GM12878 (cell line): ENCODE measurements at regions of chr3 and their contacts with region 1.

Region 1: DNA sequence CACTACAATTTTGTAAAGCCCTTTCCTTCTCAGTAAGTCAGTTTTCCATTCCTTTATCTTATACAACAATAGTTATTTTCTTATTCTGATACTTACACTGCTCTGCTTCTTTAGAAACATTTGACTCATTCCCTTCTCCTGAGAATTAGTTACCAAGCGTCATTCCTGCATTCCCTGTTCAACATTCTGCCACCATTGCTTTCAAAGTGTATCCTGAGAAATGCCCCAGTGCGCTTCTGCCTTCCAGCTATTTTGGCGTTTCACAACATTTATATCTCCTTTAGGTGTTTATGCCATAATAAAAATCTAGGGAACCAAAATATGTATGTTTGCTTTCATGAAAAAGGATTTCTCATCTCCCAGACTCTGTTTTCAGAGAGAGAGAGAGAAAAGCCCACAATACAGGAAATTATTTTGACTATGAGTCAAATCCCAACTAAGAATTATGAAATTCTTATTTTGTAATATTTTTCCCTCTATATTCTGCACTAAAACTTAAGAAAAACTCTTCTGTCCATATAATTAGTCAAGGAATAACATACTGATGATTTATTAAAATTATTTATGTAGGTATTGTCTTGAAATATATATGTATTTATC is 118.2 kb upstream of the RAP2B start:
- DNase-seq: no peak
- ATAC-seq: no peak
- H3K4me3 ChIP-seq: no peak overlapping the region
- H3K27ac ChIP-seq: no peak overlapping the region
- H3K4me1 ChIP-seq: no peaks in the 10 kb centered on the region
- H3K27me3 ChIP-seq: no peaks in the 10 kb centered on the region
- CTCF ChIP-seq: no peak
- EP300 ChIP-seq: no peak
- POLR2A ChIP-seq: no peak
- RAD21 ChIP-seq: no peak

Region 2: GRCh38 chr3:153032891-153033290 is 10.9 kb before region 1 on chr3:
- CTCF ChIA-PET with region 1: interaction called, 7 read pairs
- POLR2A ChIA-PET with region 1: no interaction called
- RAD21 ChIA-PET with region 1: interaction called, 6 read pairs
- SMC1A ChIA-PET with region 1: interaction called, 10 read pairs
- in situ Hi-C with region 1: no loop called
- intact Hi-C with region 1: no loop called
- DNase-seq: no peak
- ATAC-seq: no peak
- H3K4me3 ChIP-seq: no peak overlapping the region
- H3K27ac ChIP-seq: no peak overlapping the region
- H3K4me1 ChIP-seq: no peaks in the 10 kb centered on the region
- H3K27me3 ChIP-seq: no peaks in the 10 kb centered on the region
- CTCF ChIP-seq: no peak
- EP300 ChIP-seq: no peak
- POLR2A ChIP-seq: no peak
- RAD21 ChIP-seq: no peak

Region 3: DNA sequence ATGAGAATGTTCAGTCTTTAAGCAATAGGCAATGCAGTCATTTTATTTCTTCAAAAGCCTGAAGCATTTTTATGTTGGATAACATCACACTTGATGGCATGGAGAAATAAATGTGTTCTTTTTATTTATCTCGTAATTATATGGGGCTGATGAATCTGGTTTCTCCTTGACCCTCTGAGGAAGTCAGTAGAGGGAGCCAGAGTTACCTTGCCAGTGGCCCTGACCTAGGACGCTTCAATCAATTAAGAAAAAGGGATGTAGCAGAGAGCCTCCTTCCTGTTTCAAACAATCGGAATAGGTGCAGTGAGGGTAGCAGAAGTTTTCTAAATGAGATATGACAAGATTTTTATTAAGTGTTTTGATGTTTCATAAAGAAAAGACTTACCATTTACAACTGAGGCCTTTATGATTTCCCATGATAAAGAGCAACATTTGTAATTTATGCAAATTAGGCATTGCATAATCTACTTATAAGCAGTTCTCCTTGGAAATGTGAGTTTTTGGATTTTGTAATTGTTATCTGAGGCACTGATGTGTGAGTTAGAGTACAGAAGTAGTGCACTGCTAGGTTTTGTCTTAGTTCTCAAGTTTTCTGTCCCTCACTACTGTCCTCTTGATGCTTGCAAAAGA is 247.3 kb after region 1 on chr3:
- CTCF ChIA-PET with region 1: interaction called, 8 read pairs
- POLR2A ChIA-PET with region 1: no interaction called
- RAD21 ChIA-PET with region 1: interaction called, 6 read pairs
- SMC1A ChIA-PET with region 1: interaction called, 4 read pairs
- in situ Hi-C with region 1: no loop called
- intact Hi-C with region 1: loop called (anchors 5 kb)
- DNase-seq: no peak
- ATAC-seq: peak; percentile 86
- H3K4me3 ChIP-seq: no peak overlapping the region
- H3K27ac ChIP-seq: no peak overlapping the region
- H3K4me1 ChIP-seq: no peaks in the 10 kb centered on the region
- H3K27me3 ChIP-seq: no peaks in the 10 kb centered on the region
- CTCF ChIP-seq: peak; percentile 43 to 48 (median 47)
- EP300 ChIP-seq: no peak
- POLR2A ChIP-seq: no peak
- RAD21 ChIP-seq: peak; percentile 59

Region 4: DNA sequence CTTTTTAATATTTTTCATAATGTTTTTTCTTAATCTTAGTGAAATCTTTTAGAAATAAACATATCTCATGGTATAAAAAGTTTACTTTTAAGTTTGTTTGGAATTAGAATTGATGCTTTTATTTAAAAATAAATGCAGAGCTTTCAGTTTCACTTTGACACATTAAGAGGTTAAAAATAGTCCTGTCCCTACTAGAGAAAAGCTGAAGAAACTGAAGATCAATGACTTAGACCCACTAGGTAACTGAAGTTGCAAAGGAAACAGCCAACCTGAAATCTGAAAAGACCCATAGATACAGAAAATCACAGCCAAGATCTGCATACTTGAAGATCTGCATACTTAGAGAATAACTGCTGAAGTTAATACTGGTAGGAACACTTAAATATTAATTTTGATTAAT is 355.8 kb after region 1 on chr3:
- CTCF ChIA-PET with region 1: no interaction called
- POLR2A ChIA-PET with region 1: no interaction called
- RAD21 ChIA-PET with region 1: no interaction called
- SMC1A ChIA-PET with region 1: no interaction called
- in situ Hi-C with region 1: no loop called
- intact Hi-C with region 1: no loop called
- DNase-seq: no peak
- ATAC-seq: peak; percentile 68
- H3K4me3 ChIP-seq: no peak overlapping the region
- H3K27ac ChIP-seq: no peak overlapping the region
- H3K4me1 ChIP-seq: peaks cover 8% of the 10 kb centered on the region; the same call in 1 of the 2 replicates
- H3K27me3 ChIP-seq: no peaks in the 10 kb centered on the region
- CTCF ChIP-seq: no peak
- EP300 ChIP-seq: no peak
- POLR2A ChIP-seq: no peak
- RAD21 ChIP-seq: no peak

Region 5: GRCh38 chr3:153439777-153440176 is 395.9 kb after region 1 on chr3:
- CTCF ChIA-PET with region 1: interaction called, 5 read pairs
- POLR2A ChIA-PET with region 1: interaction called, 6 read pairs
- RAD21 ChIA-PET with region 1: interaction called, 9 read pairs
- SMC1A ChIA-PET with region 1: interaction called, 4 read pairs
- in situ Hi-C with region 1: no loop called
- intact Hi-C with region 1: loop called (anchors 10 kb)
- DNase-seq: no peak
- ATAC-seq: no peak
- H3K4me3 ChIP-seq: no peak overlapping the region
- H3K27ac ChIP-seq: no peak overlapping the region
- H3K4me1 ChIP-seq: no peaks in the 10 kb centered on the region
- H3K27me3 ChIP-seq: no peaks in the 10 kb centered on the region
- CTCF ChIP-seq: 0 out of 6 replicates have a peak, but pooled peaks of 1 of the 3 experiments have one; percentile 3
- EP300 ChIP-seq: no peak
- POLR2A ChIP-seq: no peak
- RAD21 ChIP-seq: no peak

Region 6: DNA sequence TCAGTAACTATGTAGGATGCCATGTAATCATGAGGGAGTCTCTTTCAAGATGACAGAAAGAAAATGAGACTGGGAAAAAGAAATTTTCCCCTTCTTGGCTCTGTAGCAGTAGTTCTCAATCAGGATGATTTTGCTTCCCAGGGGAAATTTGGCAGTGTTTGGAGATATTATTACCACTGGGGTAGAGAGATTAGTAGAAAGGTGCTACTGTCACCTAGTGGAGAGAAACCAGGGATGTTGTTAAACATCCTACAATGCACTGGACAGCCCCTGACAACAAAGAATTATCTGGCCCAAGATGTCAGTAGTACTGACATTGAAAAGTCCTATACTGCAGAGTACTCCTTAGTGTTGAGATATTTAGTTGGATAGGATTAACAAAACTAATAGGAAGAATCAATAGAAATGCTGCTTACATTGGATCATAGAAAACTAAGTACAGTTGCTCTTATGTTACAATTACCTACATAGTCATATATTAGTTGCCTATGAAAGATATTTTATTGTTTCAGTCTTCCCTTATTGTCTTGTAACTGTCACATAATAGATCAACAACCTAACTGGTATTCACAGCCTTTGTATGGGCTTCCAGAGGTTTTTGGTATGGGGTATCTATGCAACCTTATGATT is 551.5 kb after region 1 on chr3:
- CTCF ChIA-PET with region 1: interaction called, 4 read pairs
- POLR2A ChIA-PET with region 1: interaction called, 3 read pairs
- RAD21 ChIA-PET with region 1: no interaction called
- SMC1A ChIA-PET with region 1: interaction called, 3 read pairs
- in situ Hi-C with region 1: loop called (anchors 10 kb)
- intact Hi-C with region 1: loop called (anchors 5 kb)
- DNase-seq: no peak
- ATAC-seq: peak; percentile 75
- H3K4me3 ChIP-seq: no peak overlapping the region
- H3K27ac ChIP-seq: no peak overlapping the region
- H3K4me1 ChIP-seq: no peaks in the 10 kb centered on the region
- H3K27me3 ChIP-seq: no peaks in the 10 kb centered on the region
- CTCF ChIP-seq: peak; percentile 50 to 65 (median 54)
- EP300 ChIP-seq: no peak
- POLR2A ChIP-seq: no peak
- RAD21 ChIP-seq: peak; percentile 75

Region 7: DNA sequence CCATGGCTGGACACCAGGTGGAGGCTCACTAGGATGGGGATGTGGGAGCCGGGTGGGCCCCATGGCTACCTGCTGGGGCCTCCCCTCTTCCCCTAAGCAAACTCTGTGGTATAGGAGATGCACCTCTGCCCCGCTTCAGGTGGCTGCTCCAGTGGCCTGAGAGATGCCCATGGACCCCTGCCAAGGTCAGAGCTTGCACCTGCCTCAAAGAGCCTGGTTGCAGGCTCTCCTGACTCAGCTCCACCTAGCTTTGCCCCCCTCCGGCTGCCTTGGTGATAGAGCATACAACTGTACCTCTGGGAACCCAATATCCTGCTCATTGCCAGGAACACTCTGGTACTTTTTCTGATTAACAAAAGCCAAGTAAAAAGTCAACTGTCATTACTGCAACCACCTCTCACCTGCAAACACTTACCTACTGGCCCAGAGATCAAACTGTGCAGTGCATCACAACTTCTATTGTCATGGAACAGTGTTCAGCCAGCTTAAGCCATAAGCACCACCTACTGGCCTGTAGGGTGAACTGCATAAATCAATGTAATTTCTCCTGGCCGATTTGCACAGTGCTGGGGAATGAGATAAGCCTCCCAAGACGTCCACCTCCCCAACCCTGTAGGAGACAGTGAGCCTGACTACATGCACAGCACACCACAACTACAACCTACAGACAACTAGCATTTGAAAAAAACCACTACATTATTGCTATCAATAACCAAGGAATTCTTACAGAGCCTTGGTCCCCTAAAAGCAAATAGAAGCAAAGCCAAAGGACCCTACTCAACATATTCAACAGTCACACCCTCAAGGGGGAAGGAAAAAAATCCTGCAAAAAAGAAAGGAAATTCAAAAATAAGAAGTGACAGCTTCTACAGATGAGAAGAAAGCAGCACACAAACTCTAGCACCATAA is 725.0 kb after region 1 on chr3:
- CTCF ChIA-PET with region 1: interaction called, 9 read pairs
- POLR2A ChIA-PET with region 1: no interaction called
- RAD21 ChIA-PET with region 1: interaction called, 6 read pairs
- SMC1A ChIA-PET with region 1: interaction called, 3 read pairs
- in situ Hi-C with region 1: no loop called
- intact Hi-C with region 1: loop called (anchors 2 kb)
- DNase-seq: peak; percentile 9
- ATAC-seq: peak; percentile 98
- H3K4me3 ChIP-seq: no peak overlapping the region
- H3K27ac ChIP-seq: no peak overlapping the region
- H3K4me1 ChIP-seq: no peaks in the 10 kb centered on the region
- H3K27me3 ChIP-seq: no peaks in the 10 kb centered on the region
- CTCF ChIP-seq: peak; percentile 77 to 82 (median 79)
- EP300 ChIP-seq: no peak
- POLR2A ChIP-seq: no peak
- RAD21 ChIP-seq: peak; percentile 85